ENCODE measurements at regions of chr7 and their contacts with region 1.

Region 1: GRCh38 chr7:37510043-37510634 is 61.5 kb upstream of the ELMO1 start:
- DNase-seq: peak; percentile 72
- H3K4me3 Mint-ChIP-seq: no peak overlapping the region
- H3K27ac Mint-ChIP-seq: no peak overlapping the region
- H3K4me1 Mint-ChIP-seq: no peaks in the 10 kb centered on the region
- H3K27me3 Mint-ChIP-seq: peaks cover 28% of the 10 kb centered on the region

Region 2: GRCh38 chr7:37234928-37235327 is 275.2 kb before region 1 on chr7:
- intact Hi-C with region 1: loop called (anchors 5 kb)
- DNase-seq: no peak
- H3K4me3 Mint-ChIP-seq: no peak overlapping the region
- H3K27ac Mint-ChIP-seq: no peak overlapping the region
- H3K4me1 Mint-ChIP-seq: peaks cover 10% of the 10 kb centered on the region
- H3K27me3 Mint-ChIP-seq: no peaks in the 10 kb centered on the region